ENCODE measurements at regions of chr1 and their contacts with region 1.

Region 1: GRCh38 chr1:66282343-66282852 is 251.6 kb upstream of the SGIP1 start:
- DNase-seq: peak; percentile 92
- H3K4me3 Mint-ChIP-seq: peak overlapping the region; percentile 32
- H3K27ac Mint-ChIP-seq: peak overlapping the region; percentile 74
- H3K4me1 Mint-ChIP-seq: peaks cover 69% of the 10 kb centered on the region
- H3K27me3 Mint-ChIP-seq: no peaks in the 10 kb centered on the region

Region 2: DNA sequence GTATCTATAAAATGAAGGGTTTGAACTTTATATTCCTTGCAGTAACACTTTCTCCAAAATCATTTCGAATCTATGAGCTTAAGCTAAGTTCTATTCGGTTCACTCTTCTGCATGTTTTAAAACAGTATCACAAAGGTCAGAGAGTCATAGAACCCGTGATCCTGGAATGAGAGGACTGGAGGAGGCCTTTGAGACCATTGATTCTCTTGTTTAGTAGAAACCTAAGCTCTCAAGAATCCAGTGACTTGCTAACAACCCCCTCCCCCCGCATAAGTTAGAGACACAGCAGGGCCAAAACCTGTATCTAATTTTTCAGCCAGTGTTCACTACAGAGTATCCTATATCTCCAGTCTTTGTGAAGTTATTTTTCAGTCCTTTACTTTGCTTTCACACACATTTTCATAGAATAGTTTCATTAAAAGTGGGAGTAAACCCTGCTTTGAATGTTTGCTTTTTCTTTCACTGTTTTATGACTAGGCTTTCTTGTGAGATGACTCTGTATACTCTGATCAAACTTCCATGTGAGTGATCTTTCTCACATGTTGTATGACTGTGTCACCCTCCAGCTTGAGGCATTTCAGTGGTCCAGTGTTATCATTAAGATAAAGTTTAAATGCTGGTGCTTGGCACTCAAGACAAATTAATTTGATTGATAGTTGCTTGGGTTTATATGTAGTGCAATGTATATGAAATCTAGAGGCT is 23.8 kb before region 1 on chr1:
- intact Hi-C with region 1: loop called (anchors 1 kb)
- DNase-seq: no peak
- H3K4me3 Mint-ChIP-seq: no peak overlapping the region
- H3K27ac Mint-ChIP-seq: peak overlapping the region; percentile 59
- H3K4me1 Mint-ChIP-seq: peaks cover 57% of the 10 kb centered on the region
- H3K27me3 Mint-ChIP-seq: no peaks in the 10 kb centered on the region

Region 3: GRCh38 chr1:66294692-66295384 is 12.4 kb after region 1 on chr1:
- intact Hi-C with region 1: loop called (anchors 1 kb)
- DNase-seq: no peak
- H3K4me3 Mint-ChIP-seq: no peak overlapping the region
- H3K27ac Mint-ChIP-seq: peak overlapping the region; percentile 73
- H3K4me1 Mint-ChIP-seq: peaks cover 34% of the 10 kb centered on the region
- H3K27me3 Mint-ChIP-seq: no peaks in the 10 kb centered on the region

Region 4: GRCh38 chr1:66331657-66332547 is 49.5 kb after region 1 on chr1:
- intact Hi-C with region 1: loop called (anchors 1 kb)
- DNase-seq: peak; percentile 82
- H3K4me3 Mint-ChIP-seq: peak overlapping the region; percentile 98
- H3K27ac Mint-ChIP-seq: peak overlapping the region; percentile 97
- H3K4me1 Mint-ChIP-seq: peaks cover 56% of the 10 kb centered on the region
- H3K27me3 Mint-ChIP-seq: no peaks in the 10 kb centered on the region

Region 5: GRCh38 chr1:66399888-66400529 is 117.6 kb after region 1 on chr1:
- intact Hi-C with region 1: loop called (anchors 1 kb)
- DNase-seq: no peak
- H3K4me3 Mint-ChIP-seq: peak overlapping the region; percentile 72
- H3K27ac Mint-ChIP-seq: peak overlapping the region; percentile 90
- H3K4me1 Mint-ChIP-seq: peaks cover 43% of the 10 kb centered on the region
- H3K27me3 Mint-ChIP-seq: no peaks in the 10 kb centered on the region

Region 6: GRCh38 chr1:66446261-66447001 is 164.0 kb after region 1 on chr1:
- intact Hi-C with region 1: loop called (anchors 1 kb)
- DNase-seq: peak; percentile 87
- H3K4me3 Mint-ChIP-seq: peak overlapping the region; percentile 77
- H3K27ac Mint-ChIP-seq: peak overlapping the region; percentile 93
- H3K4me1 Mint-ChIP-seq: peaks cover 30% of the 10 kb centered on the region
- H3K27me3 Mint-ChIP-seq: peaks cover 22% of the 10 kb centered on the region

Region 7: DNA sequence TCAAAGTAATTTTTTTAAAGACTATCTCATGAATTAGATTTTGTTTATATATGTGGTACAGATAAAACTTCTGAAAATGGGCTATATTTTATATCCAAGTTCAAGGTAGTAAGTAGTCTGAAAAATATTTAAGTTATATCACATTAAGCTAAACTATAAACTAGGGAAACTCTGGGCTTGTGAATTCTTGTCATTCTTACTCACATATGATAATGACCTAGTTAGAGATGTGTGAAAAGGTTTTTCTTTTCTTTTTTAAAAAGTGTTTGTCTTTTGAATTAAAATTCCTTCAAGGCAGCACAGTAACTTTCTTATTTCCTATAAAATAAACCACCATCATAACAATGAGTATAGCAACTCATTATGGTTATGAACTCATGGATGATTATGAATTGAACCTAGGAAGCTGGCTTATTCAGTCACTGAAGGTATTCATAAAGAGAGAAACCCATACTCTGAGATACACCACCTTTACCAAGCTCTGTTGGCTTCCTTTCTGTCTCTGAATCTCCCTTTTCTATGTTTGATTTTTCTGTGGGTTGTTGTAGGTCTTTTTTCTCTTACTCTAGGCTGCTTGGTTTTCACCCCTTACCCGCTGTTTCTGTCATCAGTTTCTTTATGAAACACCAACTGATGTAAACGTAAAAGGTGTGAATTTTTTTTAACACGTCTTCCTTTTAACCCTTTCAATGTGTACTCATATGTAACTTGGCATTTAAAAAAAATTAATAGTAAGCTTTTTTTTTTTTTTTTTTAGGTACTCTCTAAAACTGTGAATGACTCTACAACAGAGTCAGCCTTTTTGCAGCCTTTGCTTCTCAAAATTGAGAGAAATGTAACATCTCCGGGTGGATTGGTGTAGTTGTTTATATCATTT is 1050.5 kb after region 1 on chr1:
- intact Hi-C with region 1: loop called (anchors 5 kb)
- DNase-seq: peak; percentile 86
- H3K4me3 Mint-ChIP-seq: peak overlapping the region; percentile 74
- H3K27ac Mint-ChIP-seq: peak overlapping the region; percentile 85
- H3K4me1 Mint-ChIP-seq: peaks cover 73% of the 10 kb centered on the region
- H3K27me3 Mint-ChIP-seq: no peaks in the 10 kb centered on the region

Measured in activated CD4-positive, alpha-beta T cell treated with anti-CD3 and anti-CD28 coated beads, Interleukin-2, amount 10 ng/mL, durations not matched to agents 24 days and 14 days (primary cell).